B cell (primary cell): ENCODE measurements at regions of chr3 and their contacts with region 1.

Region 1: DNA sequence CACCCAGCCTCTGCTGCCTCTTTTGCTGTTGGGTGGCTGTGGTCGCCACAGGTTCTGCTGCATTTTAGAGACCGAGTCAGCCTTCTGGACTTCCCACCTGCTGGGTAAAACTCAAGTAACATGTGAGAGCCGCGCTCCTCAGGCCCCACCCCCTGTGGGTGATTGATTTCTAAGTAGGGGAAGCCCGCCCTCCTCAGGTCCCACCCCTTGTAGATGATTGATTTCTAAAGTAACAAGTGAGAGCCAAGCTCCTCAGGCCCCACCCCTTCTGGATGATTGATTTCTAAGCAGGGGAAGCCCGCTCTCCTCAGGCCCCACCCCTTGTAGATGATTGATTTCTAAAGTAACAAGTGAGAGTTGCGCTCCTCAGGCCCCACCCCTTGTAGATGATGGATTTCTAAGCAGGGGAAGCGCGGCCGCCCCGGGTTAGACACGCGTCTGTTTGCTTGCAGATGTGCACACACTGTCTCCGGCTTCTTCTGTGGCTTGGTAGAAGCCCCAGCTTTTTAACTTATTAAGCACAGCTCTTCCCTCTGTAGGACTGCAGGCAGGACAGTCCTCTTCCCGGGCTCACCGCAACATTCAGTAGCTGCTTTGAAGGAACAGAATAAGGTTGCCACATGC is 83.4 kb downstream of the FAM43A start:
- DNase-seq: peak; percentile 97
- ATAC-seq: peak; percentile 97
- H3K4me3 ChIP-seq: peak overlapping the region; percentile 40 to 75 (median 55)
- H3K4me3 Mint-ChIP-seq: peak overlapping the region; percentile 85
- H3K27ac ChIP-seq: peak overlapping the region; percentile 52 to 77
- H3K27ac Mint-ChIP-seq: peak overlapping the region; percentile 83
- H3K4me1 ChIP-seq: peaks cover 19 to 29% of the 10 kb centered on the region in 2 donors
- H3K4me1 Mint-ChIP-seq: peaks cover 29% of the 10 kb centered on the region
- H3K27me3 ChIP-seq: peaks cover 0 to 2% (median 0%) of the 10 kb centered on the region in 4 experiments
- H3K27me3 Mint-ChIP-seq: peaks cover 14% of the 10 kb centered on the region
- CTCF ChIP-seq: no peak

Region 2: GRCh38 chr3:193240850-193241706 is 1528.1 kb before region 1 on chr3 and contains the start of gene PLAAT1:
- CTCF ChIA-PET with region 1: no interaction called
- POLR2A ChIA-PET with region 1: no interaction called
- intact Hi-C with region 1: no loop called
- DNase-seq: no peak
- ATAC-seq: no peak
- H3K4me3 ChIP-seq: no peak within 1 kb of the TSS
- H3K4me3 Mint-ChIP-seq: peak within 1 kb of the TSS; percentile 51
- H3K27ac ChIP-seq: no peak within 1 kb of the TSS
- H3K27ac Mint-ChIP-seq: no peak within 1 kb of the TSS
- H3K4me1 ChIP-seq: peaks cover 0 to 3% of the 10 kb centered on the region in 2 donors
- H3K4me1 Mint-ChIP-seq: peaks cover 9% of the 10 kb centered on the region
- H3K27me3 ChIP-seq: peaks cover 0 to 13% (median 5%) of the 10 kb centered on the region in 4 experiments
- H3K27me3 Mint-ChIP-seq: peaks cover 33% of the 10 kb centered on the region
- CTCF ChIP-seq: no peak
- total RNA-seq, gene PLAAT1: not detected in 2 replicates

Region 3: GRCh38 chr3:194691481-194692283 is 77.5 kb before region 1 on chr3:
- CTCF ChIA-PET with region 1: interaction called, 8 read pairs
- POLR2A ChIA-PET with region 1: interaction called, 24 read pairs
- intact Hi-C with region 1: loop called (anchors 1 kb)
- DNase-seq: peak; percentile 89
- ATAC-seq: peak; percentile 58
- H3K4me3 ChIP-seq: peak overlapping the region in 3 of 5 experiments; percentile 13 to 28 (median 13)
- H3K4me3 Mint-ChIP-seq: peak overlapping the region; percentile 82
- H3K27ac ChIP-seq: peak overlapping the region; percentile 78
- H3K27ac Mint-ChIP-seq: peak overlapping the region; percentile 97
- H3K4me1 ChIP-seq: peaks cover 71 to 88% of the 10 kb centered on the region in 2 donors
- H3K4me1 Mint-ChIP-seq: peaks cover 78% of the 10 kb centered on the region
- H3K27me3 ChIP-seq: no peaks in the 10 kb centered on the region
- H3K27me3 Mint-ChIP-seq: no peaks in the 10 kb centered on the region
- CTCF ChIP-seq: no peak

Region 4: DNA sequence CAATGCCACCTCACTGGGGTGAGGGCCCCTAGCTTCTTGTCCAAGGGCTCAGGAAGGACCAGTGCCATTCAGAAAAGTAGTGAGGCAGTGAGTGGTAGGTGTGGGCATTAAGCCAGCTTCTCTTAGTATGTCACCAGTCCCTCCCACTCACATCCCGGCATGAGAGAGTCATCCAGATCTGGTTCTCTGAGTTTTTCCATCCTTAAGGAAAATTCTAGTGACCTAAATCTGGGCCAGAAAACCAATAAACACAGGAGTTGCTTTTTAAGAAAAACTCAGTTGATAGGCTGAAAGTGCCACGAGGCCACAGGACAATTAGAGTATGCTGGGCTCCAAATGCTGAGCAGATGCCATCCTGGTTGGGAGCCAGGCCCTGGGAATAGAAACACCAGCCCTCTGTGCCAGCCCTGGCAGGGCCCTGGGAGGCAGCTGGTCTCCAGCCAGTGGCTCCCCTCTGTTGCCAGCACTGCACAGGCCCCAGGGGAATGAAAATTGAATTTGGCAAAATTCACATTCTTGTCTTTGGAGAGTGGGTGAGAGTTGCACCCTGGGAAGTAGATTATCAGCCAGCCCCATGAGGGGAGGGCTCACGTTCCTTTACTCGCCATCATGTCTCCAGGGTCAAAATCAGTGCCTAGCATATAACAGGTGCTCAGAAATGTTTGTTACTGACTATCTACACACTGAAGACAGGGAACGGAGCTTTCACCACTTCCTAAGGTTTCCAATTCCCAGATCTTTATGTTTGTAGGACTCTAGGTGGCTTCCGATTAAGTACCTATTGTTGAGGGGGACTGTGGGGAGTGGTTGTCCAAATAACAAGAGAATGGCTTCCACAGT is 30.7 kb before region 1 on chr3:
- CTCF ChIA-PET with region 1: no interaction called
- POLR2A ChIA-PET with region 1: interaction called, 6 read pairs
- intact Hi-C with region 1: loop called (anchors 1 kb)
- DNase-seq: no peak
- ATAC-seq: no peak
- H3K4me3 ChIP-seq: no peak overlapping the region
- H3K4me3 Mint-ChIP-seq: no peak overlapping the region
- H3K27ac ChIP-seq: no peak overlapping the region
- H3K27ac Mint-ChIP-seq: peak overlapping the region; percentile 27
- H3K4me1 ChIP-seq: peaks cover 25 to 35% of the 10 kb centered on the region in 2 donors
- H3K4me1 Mint-ChIP-seq: peaks cover 28% of the 10 kb centered on the region
- H3K27me3 ChIP-seq: no peaks in the 10 kb centered on the region
- H3K27me3 Mint-ChIP-seq: no peaks in the 10 kb centered on the region
- CTCF ChIP-seq: no peak

Region 5: GRCh38 chr3:195101001-195101583 is 332.0 kb after region 1 on chr3:
- CTCF ChIA-PET with region 1: no interaction called
- POLR2A ChIA-PET with region 1: no interaction called
- intact Hi-C with region 1: loop called (anchors 1 kb)
- DNase-seq: peak; percentile 85
- ATAC-seq: peak; percentile 65
- H3K4me3 ChIP-seq: peak overlapping the region in 1 of 5 experiments; percentile 61
- H3K4me3 Mint-ChIP-seq: peak overlapping the region; percentile 74
- H3K27ac ChIP-seq: peak overlapping the region; percentile 75 to 83
- H3K27ac Mint-ChIP-seq: peak overlapping the region; percentile 94
- H3K4me1 ChIP-seq: peaks cover 47 to 55% of the 10 kb centered on the region in 2 donors
- H3K4me1 Mint-ChIP-seq: peaks cover 70% of the 10 kb centered on the region
- H3K27me3 ChIP-seq: no peaks in the 10 kb centered on the region
- H3K27me3 Mint-ChIP-seq: no peaks in the 10 kb centered on the region
- CTCF ChIP-seq: no peak

Region 6: GRCh38 chr3:195162033-195162669 is 393.0 kb after region 1 on chr3:
- CTCF ChIA-PET with region 1: no interaction called
- POLR2A ChIA-PET with region 1: no interaction called
- intact Hi-C with region 1: no loop called
- DNase-seq: no peak
- ATAC-seq: peak; percentile 14
- H3K4me3 ChIP-seq: no peak overlapping the region
- H3K4me3 Mint-ChIP-seq: peak overlapping the region; percentile 61
- H3K27ac ChIP-seq: peak overlapping the region; percentile 14 to 21
- H3K27ac Mint-ChIP-seq: peak overlapping the region; percentile 86
- H3K4me1 ChIP-seq: peaks cover 43 to 64% of the 10 kb centered on the region in 2 donors
- H3K4me1 Mint-ChIP-seq: peaks cover 61% of the 10 kb centered on the region
- H3K27me3 ChIP-seq: no peaks in the 10 kb centered on the region
- H3K27me3 Mint-ChIP-seq: no peaks in the 10 kb centered on the region
- CTCF ChIP-seq: no peak